GM12878 (cell line): ENCODE measurements at regions of chr13 and their contacts with region 1.

Region 1: DNA sequence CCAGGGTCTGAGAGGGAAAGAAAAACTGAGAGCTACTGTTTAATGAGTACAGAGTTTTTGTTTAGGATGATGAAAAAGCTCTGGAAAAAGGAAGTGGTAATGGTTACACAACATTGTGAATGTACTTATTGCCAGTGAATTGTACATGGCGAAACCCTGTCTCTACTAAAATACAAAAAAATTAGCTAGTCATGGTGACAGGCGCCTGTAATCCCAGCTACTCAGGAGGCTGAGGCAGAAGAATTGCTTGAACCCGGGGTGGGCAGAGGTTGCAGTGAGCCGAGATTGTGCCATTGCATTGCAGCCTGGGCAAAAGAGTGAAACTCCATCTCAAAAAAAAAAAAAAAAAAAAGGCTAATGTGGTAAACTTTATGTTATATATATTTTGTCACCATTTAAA is 96.3 kb downstream of the VWA8 start:
- DNase-seq: no peak
- ATAC-seq: no peak
- H3K4me3 ChIP-seq: no peak overlapping the region
- H3K27ac ChIP-seq: no peak overlapping the region
- H3K4me1 ChIP-seq: peaks cover 5% of the 10 kb centered on the region; the same call in 1 of the 2 replicates
- H3K27me3 ChIP-seq: no peaks in the 10 kb centered on the region
- CTCF ChIP-seq: no peak
- EP300 ChIP-seq: no peak
- POLR2A ChIP-seq: no peak
- RAD21 ChIP-seq: no peak

Region 2: GRCh38 chr13:41029629-41030028 is 835.0 kb before region 1 on chr13:
- CTCF ChIA-PET with region 1: no interaction called
- POLR2A ChIA-PET with region 1: no interaction called
- RAD21 ChIA-PET with region 1: no interaction called
- SMC1A ChIA-PET with region 1: no interaction called
- in situ Hi-C with region 1: no loop called
- intact Hi-C with region 1: no loop called
- DNase-seq: no peak
- ATAC-seq: no peak
- H3K4me3 ChIP-seq: no peak overlapping the region
- H3K27ac ChIP-seq: no peak overlapping the region
- H3K4me1 ChIP-seq: no peaks in the 10 kb centered on the region
- H3K27me3 ChIP-seq: no peaks in the 10 kb centered on the region
- CTCF ChIP-seq: peak in 2 of 3 experiments; percentile 9 to 34; a peak in 2 of 6 replicates
- EP300 ChIP-seq: no peak
- POLR2A ChIP-seq: no peak
- RAD21 ChIP-seq: peak; percentile 46; the same call in 1 of the 2 replicates

Region 3: DNA sequence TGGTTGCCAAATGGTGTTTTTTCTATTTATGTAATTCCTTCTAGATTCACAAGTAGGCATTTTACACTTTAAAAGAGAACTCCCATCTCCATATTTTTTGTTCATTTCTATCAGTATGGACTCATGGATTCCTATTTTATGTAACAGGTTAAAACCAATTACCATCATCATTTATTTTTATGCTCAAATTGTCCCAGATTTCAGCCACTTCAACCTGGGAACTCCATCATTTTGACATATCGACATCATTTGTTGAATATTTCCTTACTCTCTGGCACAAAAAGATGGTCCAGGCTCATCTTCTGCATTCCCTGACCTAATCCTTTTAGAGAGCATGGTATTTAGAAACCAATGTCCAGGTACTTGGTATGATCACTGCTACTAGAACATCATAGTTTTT is 16.3 kb after region 1 on chr13:
- CTCF ChIA-PET with region 1: interaction called, 3 read pairs
- POLR2A ChIA-PET with region 1: interaction called, 4 read pairs
- RAD21 ChIA-PET with region 1: no interaction called
- SMC1A ChIA-PET with region 1: interaction called, 17 read pairs
- in situ Hi-C with region 1: no loop called
- intact Hi-C with region 1: no loop called
- DNase-seq: no peak
- ATAC-seq: no peak
- H3K4me3 ChIP-seq: no peak overlapping the region
- H3K27ac ChIP-seq: no peak overlapping the region
- H3K4me1 ChIP-seq: no peaks in the 10 kb centered on the region
- H3K27me3 ChIP-seq: no peaks in the 10 kb centered on the region
- CTCF ChIP-seq: no peak
- EP300 ChIP-seq: no peak
- POLR2A ChIP-seq: no peak
- RAD21 ChIP-seq: no peak

Region 4: DNA sequence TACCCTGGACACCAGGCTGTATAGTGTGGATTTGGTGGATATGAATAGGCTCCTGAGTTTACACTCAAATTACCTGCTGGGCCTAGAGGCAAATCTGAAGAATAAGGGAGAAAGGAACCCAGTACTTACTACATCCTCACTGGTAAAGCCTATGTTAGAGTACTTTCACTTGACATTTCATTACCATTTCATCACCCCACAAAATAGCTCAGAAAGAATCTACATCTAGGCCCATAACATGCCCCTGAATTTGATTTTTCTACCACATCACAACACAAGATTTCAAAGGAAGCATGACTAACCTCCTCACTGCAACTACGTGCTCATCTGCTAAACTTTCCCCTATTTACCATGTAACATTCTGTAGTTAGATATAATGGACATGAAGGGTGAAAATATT is 53.0 kb after region 1 on chr13:
- CTCF ChIA-PET with region 1: no interaction called
- POLR2A ChIA-PET with region 1: no interaction called
- RAD21 ChIA-PET with region 1: no interaction called
- SMC1A ChIA-PET with region 1: no interaction called
- in situ Hi-C with region 1: no loop called
- intact Hi-C with region 1: no loop called
- DNase-seq: no peak
- ATAC-seq: peak; percentile 37
- H3K4me3 ChIP-seq: no peak overlapping the region
- H3K27ac ChIP-seq: peak overlapping the region; percentile 82
- H3K4me1 ChIP-seq: peaks cover 41% of the 10 kb centered on the region
- H3K27me3 ChIP-seq: no peaks in the 10 kb centered on the region
- CTCF ChIP-seq: no peak
- EP300 ChIP-seq: no peak
- POLR2A ChIP-seq: no peak
- RAD21 ChIP-seq: no peak

Region 5: DNA sequence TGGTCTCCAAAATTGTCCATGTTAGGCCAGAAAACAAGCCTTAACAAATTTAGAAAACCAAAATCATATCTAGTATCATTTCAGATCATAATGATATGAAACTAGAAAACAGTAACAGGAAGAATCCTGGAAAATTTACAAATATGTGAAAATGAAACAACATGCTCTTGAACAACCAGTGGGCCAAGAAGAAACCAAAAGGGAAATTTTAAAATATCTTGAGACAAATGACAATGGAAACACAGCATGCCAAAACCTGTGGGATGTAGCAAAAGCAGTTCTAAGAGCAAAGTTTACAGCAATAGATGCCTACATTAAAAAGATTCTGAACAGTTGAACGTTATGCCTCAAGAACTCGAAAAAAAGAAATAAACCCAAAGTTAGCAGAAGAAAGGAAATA is 63.7 kb after region 1 on chr13:
- CTCF ChIA-PET with region 1: no interaction called
- POLR2A ChIA-PET with region 1: no interaction called
- RAD21 ChIA-PET with region 1: no interaction called
- SMC1A ChIA-PET with region 1: no interaction called
- in situ Hi-C with region 1: no loop called
- intact Hi-C with region 1: no loop called
- DNase-seq: no peak
- ATAC-seq: 0 out of 3 replicates have a peak, but pooled peaks have one; percentile 31
- H3K4me3 ChIP-seq: 0 out of 2 replicates have a peak overlapping the region, but pooled peaks have one; percentile 18
- H3K27ac ChIP-seq: peak overlapping the region; percentile 27
- H3K4me1 ChIP-seq: peaks cover 8% of the 10 kb centered on the region; the same call in 1 of the 2 replicates
- H3K27me3 ChIP-seq: no peaks in the 10 kb centered on the region
- CTCF ChIP-seq: no peak
- EP300 ChIP-seq: no peak
- POLR2A ChIP-seq: no peak
- RAD21 ChIP-seq: no peak

Region 6: GRCh38 chr13:42137856-42138537 is 273.3 kb after region 1 on chr13:
- CTCF ChIA-PET with region 1: no interaction called
- POLR2A ChIA-PET with region 1: no interaction called
- RAD21 ChIA-PET with region 1: no interaction called
- SMC1A ChIA-PET with region 1: no interaction called
- in situ Hi-C with region 1: no loop called
- intact Hi-C with region 1: no loop called
- DNase-seq: no peak
- ATAC-seq: peak; percentile 46
- H3K4me3 ChIP-seq: no peak overlapping the region
- H3K27ac ChIP-seq: no peak overlapping the region
- H3K4me1 ChIP-seq: no peaks in the 10 kb centered on the region; the same call in 1 of the 2 replicates
- H3K27me3 ChIP-seq: no peaks in the 10 kb centered on the region
- CTCF ChIP-seq: no peak
- EP300 ChIP-seq: no peak
- POLR2A ChIP-seq: no peak
- RAD21 ChIP-seq: no peak